ENCODE measurements at regions of chr1 and their contacts with region 1.

Region 1: GRCh38 chr1:158752155-158752712 is 2.3 kb upstream of the OR6K6 start:
- DNase-seq: no peak
- ATAC-seq: no peak
- H3K4me3 ChIP-seq: no peak overlapping the region
- H3K4me3 Mint-ChIP-seq: no peak overlapping the region
- H3K27ac ChIP-seq: no peak overlapping the region
- H3K27ac Mint-ChIP-seq: no peak overlapping the region
- H3K4me1 ChIP-seq: no peaks in the 10 kb centered on the region
- H3K4me1 Mint-ChIP-seq: no peaks in the 10 kb centered on the region
- H3K27me3 ChIP-seq: no peaks in the 10 kb centered on the region
- H3K27me3 Mint-ChIP-seq: peaks cover 15% of the 10 kb centered on the region
- CTCF ChIP-seq: no peak

Region 2: DNA sequence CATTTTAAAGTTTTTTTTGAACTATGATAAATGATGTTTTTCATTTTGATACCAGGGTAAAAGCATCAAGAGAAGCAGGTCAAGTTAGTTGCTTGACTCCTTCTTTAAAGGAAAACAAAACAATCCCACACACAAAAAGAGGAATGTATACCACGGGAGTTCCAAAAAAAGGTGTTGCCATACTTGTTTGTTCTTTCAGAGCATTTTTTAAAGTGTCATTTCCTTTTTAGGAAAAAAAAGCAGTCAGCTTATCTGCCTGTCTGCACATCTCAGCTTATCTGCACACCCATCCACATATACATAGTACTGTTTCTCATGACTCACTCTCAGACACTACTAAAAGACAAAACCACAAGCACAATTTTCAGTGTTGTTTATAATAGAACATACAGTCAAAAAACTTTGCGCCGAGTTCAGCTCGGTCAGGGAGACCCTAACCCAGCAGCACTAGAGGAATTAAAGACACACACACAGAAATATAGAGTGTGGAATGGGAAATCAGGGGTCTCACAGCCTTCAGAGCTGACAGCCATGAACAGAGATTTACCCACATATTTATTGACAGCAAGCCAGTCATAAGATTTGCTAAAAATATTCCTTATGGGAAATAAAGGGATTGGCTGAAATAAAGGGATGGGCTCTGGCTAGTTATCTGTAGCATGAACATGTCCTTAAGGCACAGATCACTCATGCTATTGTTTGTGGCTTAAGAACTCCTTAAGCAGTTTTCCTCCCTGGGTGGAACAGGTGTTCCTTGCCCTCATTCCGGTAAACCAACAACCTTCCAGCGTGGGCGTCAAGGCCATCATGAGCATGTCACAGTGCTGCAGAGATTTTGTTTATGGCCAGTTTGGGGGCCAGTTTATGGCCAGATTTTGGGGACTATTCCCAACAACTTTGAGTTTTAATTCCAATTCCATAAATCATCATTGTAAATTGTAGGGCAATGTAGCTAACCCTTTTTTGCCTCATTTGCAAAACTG is 67.5 kb after region 1 on chr1:
- CTCF ChIA-PET with region 1: no interaction called
- POLR2A ChIA-PET with region 1: no interaction called
- intact Hi-C with region 1: loop called in 1 of 2 experiments (anchors 2 kb)
- DNase-seq: peak in 4 of 9 experiments; percentile 17 to 60 (median 38)
- ATAC-seq: peak; percentile 71
- H3K4me3 ChIP-seq: no peak overlapping the region
- H3K4me3 Mint-ChIP-seq: peak overlapping the region; percentile 12
- H3K27ac ChIP-seq: peak overlapping the region in 1 of 2 experiments; percentile 61
- H3K27ac Mint-ChIP-seq: peak overlapping the region; percentile 69
- H3K4me1 ChIP-seq: no peaks in the 10 kb centered on the region
- H3K4me1 Mint-ChIP-seq: peaks cover 16% of the 10 kb centered on the region
- H3K27me3 ChIP-seq: no peaks in the 10 kb centered on the region
- H3K27me3 Mint-ChIP-seq: peaks cover 2% of the 10 kb centered on the region
- CTCF ChIP-seq: no peak

Region 3: GRCh38 chr1:158916085-158916484 is 163.9 kb after region 1 on chr1:
- CTCF ChIA-PET with region 1: no interaction called
- POLR2A ChIA-PET with region 1: no interaction called
- intact Hi-C with region 1: no loop called
- DNase-seq: no peak
- ATAC-seq: no peak
- H3K4me3 ChIP-seq: no peak overlapping the region
- H3K4me3 Mint-ChIP-seq: no peak overlapping the region
- H3K27ac ChIP-seq: no peak overlapping the region
- H3K27ac Mint-ChIP-seq: no peak overlapping the region
- H3K4me1 ChIP-seq: no peaks in the 10 kb centered on the region
- H3K4me1 Mint-ChIP-seq: no peaks in the 10 kb centered on the region
- H3K27me3 ChIP-seq: no peaks in the 10 kb centered on the region
- H3K27me3 Mint-ChIP-seq: no peaks in the 10 kb centered on the region
- CTCF ChIP-seq: no peak